Endothelial cell of umbilical vein (primary cell): ENCODE measurements at regions of chr15 and their contacts with region 1.

Region 1: GRCh38 chr15:73991726-73992593 is at the start of gene STOML1:
- DNase-seq: peak; percentile 90
- H3K4me3 ChIP-seq: peak within 1 kb of the TSS; percentile 51 to 67 (median 62)
- H3K27ac ChIP-seq: peak within 1 kb of the TSS; percentile 4
- H3K4me1 ChIP-seq: peaks cover 60% of the 10 kb centered on the region
- H3K27me3 ChIP-seq: no peaks in the 10 kb centered on the region
- CTCF ChIP-seq: peak; percentile 89 to 92
- POLR2A ChIP-seq: peak; percentile 67
- total RNA-seq, gene STOML1: 12.4 and 12.9 TPM in 2 replicates

Region 2: GRCh38 chr15:73927476-73928240 is 64.3 kb before region 1 on chr15:
- CTCF ChIA-PET with region 1: no interaction called
- POLR2A ChIA-PET with region 1: no interaction called
- dilution Hi-C with region 1: no loop called
- intact Hi-C with region 1: loop called (anchors 2 kb)
- DNase-seq: peak; percentile 45
- H3K4me3 ChIP-seq: peak overlapping the region in 1 of 3 experiments; percentile 45
- H3K27ac ChIP-seq: no peak overlapping the region
- H3K4me1 ChIP-seq: peaks cover 24% of the 10 kb centered on the region
- H3K27me3 ChIP-seq: no peaks in the 10 kb centered on the region
- CTCF ChIP-seq: peak; percentile 28 to 51
- POLR2A ChIP-seq: no peak

Region 3: DNA sequence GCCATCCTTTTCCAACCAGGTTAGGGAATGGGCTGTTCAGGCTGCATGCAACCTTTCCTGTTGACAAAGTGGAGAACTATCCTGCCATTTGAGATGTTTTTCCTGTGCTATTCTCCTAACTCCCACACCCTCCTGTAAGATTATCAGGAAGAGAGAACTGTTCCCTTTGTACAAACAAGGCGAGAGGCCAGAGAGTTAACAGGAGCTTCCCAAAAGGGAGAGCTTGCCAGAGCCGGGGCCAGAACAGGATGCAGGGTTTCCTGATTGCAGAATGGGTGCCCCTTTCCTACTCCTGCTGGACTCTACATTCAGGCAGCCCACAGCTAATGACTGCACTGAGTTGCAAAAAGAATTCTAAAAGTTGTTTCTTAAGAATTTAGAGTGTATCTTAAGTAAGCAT is 19.6 kb after region 1 on chr15:
- CTCF ChIA-PET with region 1: interaction called, 24 read pairs
- POLR2A ChIA-PET with region 1: interaction called, 3 read pairs
- dilution Hi-C with region 1: no loop called
- intact Hi-C with region 1: loop called (anchors 1 kb)
- DNase-seq: peak; percentile 92
- H3K4me3 ChIP-seq: peak overlapping the region in 1 of 3 experiments; percentile 56
- H3K27ac ChIP-seq: peak overlapping the region; percentile 47
- H3K4me1 ChIP-seq: peaks cover 51% of the 10 kb centered on the region
- H3K27me3 ChIP-seq: no peaks in the 10 kb centered on the region
- CTCF ChIP-seq: no peak
- POLR2A ChIP-seq: peak; percentile 40

Region 4: DNA sequence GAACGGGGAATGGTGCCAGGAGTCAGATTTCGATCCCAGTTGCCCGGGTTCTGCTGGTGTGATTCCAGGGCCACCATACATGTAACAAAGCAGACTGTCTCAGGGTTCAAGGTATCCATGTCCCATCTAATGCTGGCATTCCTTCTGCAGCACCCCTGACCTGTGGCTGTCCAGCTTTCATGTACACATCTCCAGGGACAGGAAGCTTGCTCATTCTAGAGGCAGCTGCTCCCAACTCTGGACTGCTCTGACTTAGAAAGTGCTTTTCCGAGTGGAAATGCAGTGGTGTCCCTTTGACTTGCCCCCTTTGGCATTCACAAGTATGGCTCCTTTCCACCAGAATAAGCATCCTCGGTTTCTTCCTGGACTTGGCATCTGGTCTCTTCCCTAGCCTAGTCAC is 33.5 kb after region 1 on chr15:
- CTCF ChIA-PET with region 1: interaction called, 6 read pairs
- POLR2A ChIA-PET with region 1: no interaction called
- dilution Hi-C with region 1: no loop called
- intact Hi-C with region 1: loop called (anchors 1 kb)
- DNase-seq: peak; percentile 70
- H3K4me3 ChIP-seq: no peak overlapping the region
- H3K27ac ChIP-seq: peak overlapping the region; percentile 62
- H3K4me1 ChIP-seq: peaks cover 22% of the 10 kb centered on the region
- H3K27me3 ChIP-seq: no peaks in the 10 kb centered on the region
- CTCF ChIP-seq: no peak
- POLR2A ChIP-seq: no peak

Region 5: GRCh38 chr15:74044267-74045110 is 52.5 kb after region 1 on chr15:
- CTCF ChIA-PET with region 1: interaction called, 14 read pairs
- POLR2A ChIA-PET with region 1: interaction called, 3 read pairs
- dilution Hi-C with region 1: no loop called
- intact Hi-C with region 1: no loop called
- DNase-seq: no peak
- H3K4me3 ChIP-seq: no peak overlapping the region
- H3K27ac ChIP-seq: no peak overlapping the region
- H3K4me1 ChIP-seq: peaks cover 9% of the 10 kb centered on the region
- H3K27me3 ChIP-seq: no peaks in the 10 kb centered on the region
- CTCF ChIP-seq: no peak
- POLR2A ChIP-seq: no peak

Region 6: GRCh38 chr15:74202452-74203428 is 210.8 kb after region 1 on chr15 and contains the start of gene STRA6:
- CTCF ChIA-PET with region 1: no interaction called
- POLR2A ChIA-PET with region 1: no interaction called
- dilution Hi-C with region 1: no loop called
- intact Hi-C with region 1: no loop called
- DNase-seq: no peak
- H3K4me3 ChIP-seq: no peak within 1 kb of the TSS
- H3K27ac ChIP-seq: no peak within 1 kb of the TSS
- H3K4me1 ChIP-seq: peaks cover 3% of the 10 kb centered on the region
- H3K27me3 ChIP-seq: peaks cover 0 to 3% of the 10 kb centered on the region in 2 experiments
- CTCF ChIP-seq: no peak
- POLR2A ChIP-seq: no peak
- total RNA-seq, gene STRA6: not detected in 2 replicates

Region 7: GRCh38 chr15:74540761-74541493 is 549.0 kb after region 1 on chr15 and contains the start of gene ARID3B:
- CTCF ChIA-PET with region 1: no interaction called
- POLR2A ChIA-PET with region 1: no interaction called
- dilution Hi-C with region 1: no loop called
- intact Hi-C with region 1: no loop called
- DNase-seq: peak; percentile 94
- H3K4me3 ChIP-seq: peak within 1 kb of the TSS; percentile 87 to 98 (median 94)
- H3K27ac ChIP-seq: peak within 1 kb of the TSS; percentile 67
- H3K4me1 ChIP-seq: peaks cover 17% of the 10 kb centered on the region
- H3K27me3 ChIP-seq: no peaks in the 10 kb centered on the region
- CTCF ChIP-seq: no peak
- POLR2A ChIP-seq: peak; percentile 89
- total RNA-seq, gene ARID3B: 9.5 and 10.0 TPM in 2 replicates